GM10248 (cell line): ENCODE measurements at regions of chr17 and their contacts with region 1.

Region 1: DNA sequence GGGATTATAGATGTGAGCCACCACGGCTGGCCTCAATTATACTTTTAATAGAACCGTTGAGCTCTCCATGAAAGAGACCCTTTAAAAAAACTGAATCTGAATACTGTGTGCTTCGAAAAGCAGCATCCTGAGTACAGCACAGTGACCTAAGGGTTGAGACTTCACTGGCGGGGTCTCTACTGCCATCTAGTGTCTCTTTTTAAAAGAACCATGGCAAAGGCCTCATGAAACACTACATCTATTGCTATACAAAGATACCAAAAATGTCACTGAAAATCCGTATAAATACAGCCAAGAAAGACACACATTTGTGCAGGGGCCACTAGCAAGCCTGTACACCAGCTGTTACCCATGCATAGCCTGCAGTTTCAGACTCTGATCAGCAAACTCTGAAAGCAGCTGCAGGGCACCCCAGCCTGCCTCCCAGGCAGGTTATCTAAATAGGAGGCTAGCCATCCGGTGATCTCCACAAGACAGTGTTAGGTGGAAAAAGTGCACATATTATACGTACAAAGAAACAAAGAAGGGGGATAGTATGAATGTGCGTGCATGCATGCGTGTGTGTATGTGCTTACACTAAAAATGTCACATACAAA is 35.3 kb downstream of the NPLOC4 start:
- DNase-seq: peak; percentile 77
- CTCF ChIP-seq: peak; percentile 64

Region 2: GRCh38 chr17:81519284-81519955 is 82.2 kb before region 1 on chr17:
- CTCF ChIA-PET with region 1: interaction called, 20 read pairs
- POLR2A ChIA-PET with region 1: no interaction called
- DNase-seq: peak; percentile 77
- CTCF ChIP-seq: peak; percentile 42

Region 3: DNA sequence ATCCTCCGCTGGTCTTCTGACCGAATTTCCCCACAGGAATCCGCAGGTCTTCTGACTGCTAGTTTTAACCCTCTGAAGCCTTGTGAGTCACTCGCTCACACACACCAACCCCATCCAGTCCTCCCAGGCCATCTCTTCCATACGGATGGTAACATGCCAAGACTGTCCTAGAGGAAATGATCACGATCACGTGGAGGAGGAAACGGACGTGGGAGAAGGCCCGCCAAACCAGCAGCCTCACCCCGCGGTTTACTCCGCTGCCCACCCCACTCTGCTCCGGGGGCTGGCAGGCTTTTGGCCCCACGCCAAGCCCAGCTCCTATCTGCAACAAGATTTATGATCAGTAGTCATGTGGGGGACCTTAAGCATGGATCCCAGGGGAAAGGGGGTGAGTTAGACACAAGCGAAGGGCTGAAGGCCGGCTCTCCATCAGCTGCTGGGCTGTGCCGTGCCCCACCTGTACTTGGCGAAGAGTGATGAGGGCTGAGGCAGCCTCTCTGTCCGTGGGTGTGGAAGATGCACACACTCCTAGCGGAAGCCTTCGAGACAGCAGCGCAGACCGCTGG is 47.9 kb before region 1 on chr17:
- CTCF ChIA-PET with region 1: interaction called, 12 read pairs
- POLR2A ChIA-PET with region 1: interaction called, 3 read pairs
- DNase-seq: no peak
- CTCF ChIP-seq: no peak

Region 4: GRCh38 chr17:81576621-81577277 is 24.9 kb before region 1 on chr17:
- CTCF ChIA-PET with region 1: interaction called, 18 read pairs
- POLR2A ChIA-PET with region 1: no interaction called
- DNase-seq: no peak
- CTCF ChIP-seq: no peak

Region 5: GRCh38 chr17:81582341-81582740 is 19.3 kb before region 1 on chr17:
- CTCF ChIA-PET with region 1: interaction called, 18 read pairs
- POLR2A ChIA-PET with region 1: no interaction called
- DNase-seq: no peak
- CTCF ChIP-seq: no peak

Region 6: GRCh38 chr17:81612172-81612970 is 10.7 kb after region 1 on chr17:
- CTCF ChIA-PET with region 1: interaction called, 27 read pairs
- POLR2A ChIA-PET with region 1: no interaction called
- DNase-seq: no peak
- CTCF ChIP-seq: no peak